Activated CD4-positive, alpha-beta T cell treated with anti-CD3 and anti-CD28 coated beads for 36 hours (primary cell): ENCODE measurements at regions of chr5 and their contacts with region 1.

Region 1: GRCh38 chr5:21810737-21811316 is 1042.3 kb downstream of the CDH12 start:
- DNase-seq: no peak
- ATAC-seq: no peak
- H3K4me3 Mint-ChIP-seq: no peak overlapping the region
- H3K27ac Mint-ChIP-seq: no peak overlapping the region
- H3K4me1 Mint-ChIP-seq: no peaks in the 10 kb centered on the region
- H3K27me3 Mint-ChIP-seq: no peaks in the 10 kb centered on the region

Region 2: GRCh38 chr5:21774791-21775190 is 36.0 kb before region 1 on chr5:
- CTCF ChIA-PET with region 1: no interaction called
- POLR2A ChIA-PET with region 1: no interaction called
- intact Hi-C with region 1: no loop called
- DNase-seq: no peak
- ATAC-seq: no peak
- H3K4me3 Mint-ChIP-seq: no peak overlapping the region
- H3K27ac Mint-ChIP-seq: no peak overlapping the region
- H3K4me1 Mint-ChIP-seq: no peaks in the 10 kb centered on the region
- H3K27me3 Mint-ChIP-seq: no peaks in the 10 kb centered on the region

Region 3: GRCh38 chr5:23139338-23140171 is 1328.7 kb after region 1 on chr5:
- CTCF ChIA-PET with region 1: no interaction called
- POLR2A ChIA-PET with region 1: no interaction called
- intact Hi-C with region 1: loop called in 1 of 2 experiments (anchors 5 kb)
- DNase-seq: no peak
- ATAC-seq: no peak
- H3K4me3 Mint-ChIP-seq: no peak overlapping the region
- H3K27ac Mint-ChIP-seq: no peak overlapping the region
- H3K4me1 Mint-ChIP-seq: no peaks in the 10 kb centered on the region
- H3K27me3 Mint-ChIP-seq: no peaks in the 10 kb centered on the region